ENCODE measurements at regions of chr6 and their contacts with region 1.

Region 1: GRCh38 chr6:38646166-38646878 is 6.6 kb upstream of the BTBD9 start:
- DNase-seq: no peak
- H3K4me3 ChIP-seq: no peak overlapping the region
- H3K27ac ChIP-seq: no peak overlapping the region
- H3K4me1 ChIP-seq: peaks cover 5% of the 10 kb centered on the region
- H3K27me3 ChIP-seq: no peaks in the 10 kb centered on the region
- CTCF ChIP-seq: no peak
- EP300 ChIP-seq: no peak
- POLR2A ChIP-seq: no peak

Region 2: GRCh38 chr6:38673397-38674165 is 27.3 kb after region 1 on chr6:
- intact Hi-C with region 1: loop called in 1 of 4 experiments (anchors 2 kb)
- DNase-seq: no peak
- H3K4me3 ChIP-seq: no peak overlapping the region
- H3K27ac ChIP-seq: no peak overlapping the region
- H3K4me1 ChIP-seq: peaks cover 6% of the 10 kb centered on the region
- H3K27me3 ChIP-seq: no peaks in the 10 kb centered on the region
- CTCF ChIP-seq: no peak
- EP300 ChIP-seq: no peak
- POLR2A ChIP-seq: no peak

Region 3: DNA sequence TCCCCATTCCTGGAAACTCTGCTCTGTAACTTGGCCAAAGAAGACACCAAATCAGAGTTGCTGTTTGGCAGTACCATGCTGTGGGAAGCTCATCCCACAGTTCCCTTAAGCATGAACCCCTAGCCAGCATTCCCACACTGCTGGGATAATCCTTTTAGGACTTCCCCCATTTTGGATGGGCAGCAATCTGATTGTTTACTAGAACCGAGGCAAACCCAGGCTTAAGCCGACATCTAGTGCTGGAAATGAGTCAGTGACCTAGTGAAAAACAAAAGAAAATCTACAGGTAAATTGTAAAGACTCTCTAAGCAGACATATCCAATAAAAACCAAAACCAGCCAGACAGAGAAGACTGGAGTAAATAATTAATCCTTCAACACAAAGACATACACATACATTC is 74.0 kb after region 1 on chr6:
- intact Hi-C with region 1: no loop called
- DNase-seq: no peak
- H3K4me3 ChIP-seq: no peak overlapping the region
- H3K27ac ChIP-seq: no peak overlapping the region
- H3K4me1 ChIP-seq: no peaks in the 10 kb centered on the region
- H3K27me3 ChIP-seq: no peaks in the 10 kb centered on the region
- CTCF ChIP-seq: no peak
- EP300 ChIP-seq: no peak
- POLR2A ChIP-seq: no peak

Region 4: DNA sequence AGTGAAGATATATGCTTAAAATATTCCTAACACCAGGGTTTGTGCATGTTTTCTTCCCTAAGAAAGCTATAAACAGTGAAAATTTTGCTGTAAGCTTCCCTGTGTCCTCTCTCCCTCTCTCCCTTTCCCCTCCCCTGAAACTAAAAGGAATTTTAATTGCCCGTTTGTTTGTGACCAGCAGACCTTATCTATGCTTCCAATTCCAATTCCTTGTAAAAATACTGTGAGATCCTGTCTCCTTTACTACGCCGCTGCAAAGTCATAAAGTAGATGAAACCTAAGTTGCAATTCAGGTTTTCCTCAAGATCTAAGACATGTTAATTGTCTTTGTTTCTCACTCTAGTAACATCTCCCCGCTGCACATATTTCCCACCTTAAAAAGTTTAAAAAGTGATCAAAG is 151.1 kb after region 1 on chr6:
- intact Hi-C with region 1: no loop called
- DNase-seq: no peak
- H3K4me3 ChIP-seq: no peak overlapping the region
- H3K27ac ChIP-seq: no peak overlapping the region
- H3K4me1 ChIP-seq: no peaks in the 10 kb centered on the region
- H3K27me3 ChIP-seq: no peaks in the 10 kb centered on the region
- CTCF ChIP-seq: no peak
- EP300 ChIP-seq: no peak
- POLR2A ChIP-seq: no peak

Region 5: DNA sequence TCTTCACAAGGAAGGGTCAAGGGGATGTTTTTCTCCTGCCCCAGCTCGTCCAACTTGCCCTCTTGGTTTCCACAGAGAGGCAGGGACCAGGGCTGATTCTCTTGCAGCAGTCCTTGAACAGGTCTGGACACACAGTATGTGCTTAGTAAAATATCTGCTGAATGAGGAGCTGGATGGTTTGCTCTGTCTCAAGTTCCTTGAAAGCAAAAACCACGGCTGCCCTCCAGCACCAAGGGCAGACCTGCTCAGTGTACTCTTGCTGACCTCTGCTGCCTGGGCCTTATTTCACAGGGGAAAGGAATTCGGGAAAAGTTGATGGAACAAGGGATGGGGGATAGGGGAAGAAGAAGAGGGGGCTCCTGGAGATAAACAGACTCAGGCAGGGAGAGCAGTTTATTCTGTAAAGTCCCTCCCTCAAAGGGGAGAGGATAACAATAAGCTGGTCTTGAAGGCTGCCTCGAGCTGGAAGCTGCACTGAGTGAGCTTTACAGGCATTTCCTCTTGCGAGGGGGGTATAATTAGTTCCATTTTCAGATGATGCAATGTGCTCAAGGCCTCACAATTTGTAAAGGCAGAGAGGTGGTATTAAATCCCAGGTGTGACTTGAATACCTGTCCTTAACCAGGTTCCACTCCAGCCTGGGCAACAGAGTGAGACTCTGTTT is 572.7 kb after region 1 on chr6:
- intact Hi-C with region 1: no loop called
- DNase-seq: no peak
- H3K4me3 ChIP-seq: no peak overlapping the region
- H3K27ac ChIP-seq: no peak overlapping the region
- H3K4me1 ChIP-seq: peaks cover 29% of the 10 kb centered on the region
- H3K27me3 ChIP-seq: no peaks in the 10 kb centered on the region
- CTCF ChIP-seq: no peak
- EP300 ChIP-seq: no peak
- POLR2A ChIP-seq: no peak